Psoas muscle (tissue), 8 donors: ENCODE measurements at regions of chr17 and their contacts with region 1.

Region 1: DNA sequence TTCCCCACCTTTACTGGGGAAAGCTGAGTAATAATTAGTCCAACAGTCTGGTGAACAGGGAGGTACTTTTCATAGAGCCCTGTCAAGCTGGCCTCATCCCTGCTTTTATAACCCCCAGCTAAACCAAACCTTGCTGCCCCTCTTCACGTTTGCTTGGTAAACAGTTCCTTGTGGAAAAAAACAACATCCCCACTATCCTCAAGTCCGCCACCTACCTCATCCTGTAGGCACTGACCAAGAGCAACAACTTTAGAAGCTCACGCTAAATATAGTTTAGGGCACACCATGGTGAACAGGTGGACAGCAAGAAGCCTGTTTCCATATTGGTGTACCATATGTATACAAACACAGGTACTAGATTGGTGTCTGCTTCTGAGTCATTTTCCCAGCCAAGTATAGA is 16.5 kb downstream of the NFE2L1 start:
- DNase-seq: no peak
- ATAC-seq: peak; percentile 77 to 86 (median 80)
- H3K4me3 ChIP-seq: no peak overlapping the region
- H3K27ac ChIP-seq: peak overlapping the region; percentile 92
- H3K4me1 ChIP-seq: peaks cover 73% of the 10 kb centered on the region
- H3K27me3 ChIP-seq: no peaks in the 10 kb centered on the region
- CTCF ChIP-seq: peak; percentile 44

Region 2: GRCh38 chr17:48051706-48052486 is 12.7 kb before region 1 on chr17:
- intact Hi-C with region 1: loop called in 1 of 2 experiments (anchors 2 kb)
- DNase-seq: peak; percentile 63 to 86
- ATAC-seq: peak in 3 of 4 donors; percentile 29 to 43 (median 31)
- H3K4me3 ChIP-seq: peak overlapping the region; percentile 87
- H3K27ac ChIP-seq: peak overlapping the region; percentile 97
- H3K4me1 ChIP-seq: peaks cover 57% of the 10 kb centered on the region
- H3K27me3 ChIP-seq: no peaks in the 10 kb centered on the region
- CTCF ChIP-seq: no peak